Naive thymus-derived CD4-positive, alpha-beta T cell (primary cell): ENCODE measurements at regions of chr17 and their contacts with region 1.

Region 1: GRCh38 chr17:57849874-57850754 is at the start of gene MRPS23:
- DNase-seq: peak; percentile 85 to 98 (median 94)
- ATAC-seq: peak; percentile 99
- H3K4me3 ChIP-seq: peak within 1 kb of the TSS; percentile 88
- H3K4me3 Mint-ChIP-seq: peak within 1 kb of the TSS; percentile 92 to 100 (median 99)
- H3K27ac ChIP-seq: peak within 1 kb of the TSS; percentile 86
- H3K27ac Mint-ChIP-seq: peak within 1 kb of the TSS; percentile 97 to 100 (median 100)
- H3K4me1 ChIP-seq: peaks cover 20 to 27% of the 10 kb centered on the region in 2 donors
- H3K4me1 Mint-ChIP-seq: peaks cover 24 to 61% (median 49%) of the 10 kb centered on the region in 7 donors
- H3K27me3 ChIP-seq: no peaks in the 10 kb centered on the region
- H3K27me3 Mint-ChIP-seq: no peaks in the 10 kb centered on the region
- total RNA-seq, gene MRPS23: 13.0 to 40.5 (median 24.6) TPM

Region 2: GRCh38 chr17:56977673-56978395 is 872.3 kb before region 1 on chr17 and contains the start of gene SCPEP1:
- CTCF ChIA-PET with region 1: no interaction called
- POLR2A ChIA-PET with region 1: interaction called, 3 read pairs
- intact Hi-C with region 1: loop called in 1 of 2 experiments (anchors 5 kb)
- DNase-seq: peak; percentile 65 to 82 (median 76)
- ATAC-seq: peak; percentile 99
- H3K4me3 ChIP-seq: peak within 1 kb of the TSS; percentile 92
- H3K4me3 Mint-ChIP-seq: peak within 1 kb of the TSS; percentile 85 to 96 (median 93)
- H3K27ac ChIP-seq: peak within 1 kb of the TSS; percentile 63
- H3K27ac Mint-ChIP-seq: peak within 1 kb of the TSS; percentile 70 to 98 (median 86)
- H3K4me1 ChIP-seq: peaks cover 10 to 12% of the 10 kb centered on the region in 2 donors
- H3K4me1 Mint-ChIP-seq: peaks cover 11 to 33% (median 24%) of the 10 kb centered on the region in 7 donors
- H3K27me3 ChIP-seq: no peaks in the 10 kb centered on the region
- H3K27me3 Mint-ChIP-seq: peaks cover 0 to 32% (median 0%) of the 10 kb centered on the region in 5 donors
- total RNA-seq, gene SCPEP1: 8.4 to 81.6 (median 27.1) TPM

Region 3: DNA sequence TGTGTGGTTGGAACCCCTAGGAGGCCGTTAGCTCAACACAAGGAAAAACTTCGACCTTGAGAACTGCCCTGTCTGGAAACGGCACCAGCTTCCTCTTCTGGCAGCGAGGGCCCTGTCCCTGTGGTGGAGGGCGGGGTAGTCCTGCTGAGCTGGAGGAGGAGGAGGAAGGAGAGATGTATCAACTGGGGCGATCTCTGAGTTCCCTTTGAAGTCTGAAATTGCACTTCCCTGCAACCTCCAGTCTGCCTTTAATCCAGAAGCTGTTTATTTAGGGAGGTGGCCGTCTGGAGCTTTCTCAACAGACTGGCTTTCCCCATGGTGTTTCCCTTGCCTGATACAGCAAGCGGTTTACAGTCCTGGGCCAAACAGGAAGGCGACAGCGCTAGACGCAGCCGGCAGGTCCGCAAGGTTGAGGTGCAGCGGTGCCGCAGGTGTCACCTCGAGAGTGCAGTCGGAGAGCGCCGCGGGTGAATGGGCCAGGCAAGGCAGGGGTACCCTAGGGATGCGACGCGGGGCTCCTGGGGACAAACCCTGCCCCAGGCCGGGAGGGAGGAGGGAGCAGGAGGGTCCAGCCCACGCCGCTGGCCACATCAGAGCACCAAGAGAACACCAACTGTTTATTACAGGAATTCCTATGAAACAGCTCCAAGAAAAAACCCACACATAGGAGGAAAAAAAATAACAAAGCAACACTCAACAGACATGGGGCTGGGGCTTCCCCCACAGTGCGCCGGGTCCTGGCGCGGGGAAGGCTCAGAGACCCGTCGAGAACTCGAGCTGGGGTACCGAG is 11.1 kb after region 1 on chr17:
- CTCF ChIA-PET with region 1: interaction called, 3 read pairs
- POLR2A ChIA-PET with region 1: interaction called, 16 read pairs
- intact Hi-C with region 1: no loop called
- DNase-seq: peak in 5 of 9 donors; percentile 21 to 36 (median 27)
- ATAC-seq: peak; percentile 83
- H3K4me3 ChIP-seq: peak overlapping the region; percentile 60
- H3K4me3 Mint-ChIP-seq: peak overlapping the region; percentile 83 to 89 (median 86)
- H3K27ac ChIP-seq: no peak overlapping the region
- H3K27ac Mint-ChIP-seq: no peak overlapping the region
- H3K4me1 ChIP-seq: peaks cover 0 to 7% of the 10 kb centered on the region in 2 donors
- H3K4me1 Mint-ChIP-seq: peaks cover 9 to 16% (median 13%) of the 10 kb centered on the region in 7 donors
- H3K27me3 ChIP-seq: peaks cover 0 to 4% of the 10 kb centered on the region in 2 donors
- H3K27me3 Mint-ChIP-seq: peaks cover 0 to 45% (median 12%) of the 10 kb centered on the region in 5 donors

Region 4: GRCh38 chr17:57995076-57995956 is 145.2 kb after region 1 on chr17:
- CTCF ChIA-PET with region 1: interaction called, 6 read pairs
- POLR2A ChIA-PET with region 1: interaction called, 23 read pairs
- intact Hi-C with region 1: loop called in 1 of 2 experiments (anchors 2 kb)
- DNase-seq: peak in 8 of 9 donors; percentile 27 to 66 (median 52)
- ATAC-seq: peak; percentile 91
- H3K4me3 ChIP-seq: no peak overlapping the region
- H3K4me3 Mint-ChIP-seq: peak overlapping the region in 4 of 10 donors; percentile 1 to 30 (median 12)
- H3K27ac ChIP-seq: peak overlapping the region; percentile 56
- H3K27ac Mint-ChIP-seq: peak overlapping the region; percentile 10 to 90 (median 70)
- H3K4me1 ChIP-seq: peaks cover 0 to 19% of the 10 kb centered on the region in 2 donors
- H3K4me1 Mint-ChIP-seq: peaks cover 16 to 61% (median 52%) of the 10 kb centered on the region in 7 donors
- H3K27me3 ChIP-seq: no peaks in the 10 kb centered on the region
- H3K27me3 Mint-ChIP-seq: no peaks in the 10 kb centered on the region

Region 5: GRCh38 chr17:58172369-58173071 is 322.4 kb after region 1 on chr17:
- CTCF ChIA-PET with region 1: no interaction called
- POLR2A ChIA-PET with region 1: no interaction called
- intact Hi-C with region 1: loop called (anchors 5 to 10 kb)
- DNase-seq: peak in 7 of 9 donors; percentile 42 to 69 (median 61)
- ATAC-seq: peak; percentile 80
- H3K4me3 ChIP-seq: no peak overlapping the region
- H3K4me3 Mint-ChIP-seq: peak overlapping the region in 9 of 10 donors; percentile 8 to 71 (median 35)
- H3K27ac ChIP-seq: no peak overlapping the region
- H3K27ac Mint-ChIP-seq: peak overlapping the region in 8 of 9 donors; percentile 2 to 96 (median 74)
- H3K4me1 ChIP-seq: peaks cover 38 to 39% of the 10 kb centered on the region in 2 donors
- H3K4me1 Mint-ChIP-seq: peaks cover 31 to 49% (median 48%) of the 10 kb centered on the region in 7 donors
- H3K27me3 ChIP-seq: no peaks in the 10 kb centered on the region
- H3K27me3 Mint-ChIP-seq: peaks cover 0 to 20% (median 2%) of the 10 kb centered on the region in 5 donors

Region 6: GRCh38 chr17:59155439-59156182 is 1305.5 kb after region 1 on chr17 and contains the start of gene PRR11:
- CTCF ChIA-PET with region 1: no interaction called
- POLR2A ChIA-PET with region 1: no interaction called
- intact Hi-C with region 1: loop called in 1 of 2 experiments (anchors 2 kb)
- DNase-seq: peak in 6 of 9 donors; percentile 62 to 99 (median 98)
- ATAC-seq: peak; percentile 91
- H3K4me3 ChIP-seq: peak within 1 kb of the TSS; percentile 89
- H3K4me3 Mint-ChIP-seq: no peak within 1 kb of the TSS
- H3K27ac ChIP-seq: peak within 1 kb of the TSS; percentile 75
- H3K27ac Mint-ChIP-seq: no peak within 1 kb of the TSS
- H3K4me1 ChIP-seq: peaks cover 10 to 13% of the 10 kb centered on the region in 2 donors
- H3K4me1 Mint-ChIP-seq: peaks cover 8 to 52% (median 36%) of the 10 kb centered on the region in 7 donors
- H3K27me3 ChIP-seq: no peaks in the 10 kb centered on the region
- H3K27me3 Mint-ChIP-seq: no peaks in the 10 kb centered on the region
- total RNA-seq, gene PRR11: 0.61 to 41.9 (median 1.00) TPM